A549 (cell line): ENCODE measurements at regions of chr5 and their contacts with region 1.

Region 1: GRCh38 chr5:17189381-17190036 is 27.9 kb upstream of the BASP1 start:
- DNase-seq: peak; percentile 49 to 83
- ATAC-seq: peak; percentile 64 to 79
- H3K4me3 ChIP-seq: no peak overlapping the region
- H3K27ac ChIP-seq: peak overlapping the region; percentile 8 to 75; a peak in 5 of 6 replicates
- H3K4me1 ChIP-seq: peaks cover 51% of the 10 kb centered on the region
- CTCF ChIP-seq: peak; percentile 91
- EP300 ChIP-seq: no peak
- POLR2A ChIP-seq: no peak
- RAD21 ChIP-seq: peak; percentile 86 to 95

Region 2: DNA sequence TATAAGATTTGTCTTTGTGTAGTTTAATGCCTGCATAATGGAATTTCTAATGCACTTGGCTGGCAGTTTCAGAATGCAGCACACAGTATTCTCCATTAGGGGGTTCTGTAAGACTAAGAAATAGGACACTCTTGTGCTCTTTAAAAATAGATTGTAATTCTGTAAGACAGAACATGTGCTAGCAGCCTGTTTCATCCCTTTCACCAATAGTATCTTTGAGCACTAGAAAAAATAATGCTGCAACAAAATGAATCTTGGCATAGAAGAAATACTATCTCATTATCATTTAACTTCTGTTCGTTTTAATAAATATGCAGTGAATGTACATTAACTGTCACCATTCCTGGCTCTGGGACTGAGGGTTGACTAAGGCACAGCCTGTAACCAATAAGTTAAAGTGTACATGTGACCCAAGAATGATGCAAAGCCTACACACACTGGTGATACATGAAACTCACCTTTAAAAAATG is 700.2 kb before region 1 on chr5:
- CTCF ChIA-PET with region 1: interaction called, 16 read pairs
- POLR2A ChIA-PET with region 1: no interaction called
- DNase-seq: peak; percentile 45 to 47
- ATAC-seq: peak; percentile 87 to 93
- H3K4me3 ChIP-seq: no peak overlapping the region
- H3K27ac ChIP-seq: no peak overlapping the region
- H3K4me1 ChIP-seq: 0 out of 3 replicates have a peak, but pooled peaks cover 6% of the 10 kb centered on the region
- CTCF ChIP-seq: peak; percentile 79
- EP300 ChIP-seq: no peak
- POLR2A ChIP-seq: no peak
- RAD21 ChIP-seq: peak; percentile 82 to 87

Region 3: GRCh38 chr5:16759147-16759773 is 430.2 kb before region 1 on chr5:
- CTCF ChIA-PET with region 1: interaction called, 12 read pairs
- POLR2A ChIA-PET with region 1: no interaction called
- DNase-seq: no peak
- ATAC-seq: no peak
- H3K4me3 ChIP-seq: no peak overlapping the region
- H3K27ac ChIP-seq: no peak overlapping the region
- H3K4me1 ChIP-seq: no peaks in the 10 kb centered on the region
- CTCF ChIP-seq: no peak
- EP300 ChIP-seq: no peak
- POLR2A ChIP-seq: no peak
- RAD21 ChIP-seq: no peak

Region 4: GRCh38 chr5:16855485-16855884 is 334.0 kb before region 1 on chr5:
- CTCF ChIA-PET with region 1: interaction called, 15 read pairs
- POLR2A ChIA-PET with region 1: no interaction called
- DNase-seq: no peak
- ATAC-seq: peak in 1 of 2 experiments; percentile 8; a peak in 1 of 6 replicates
- H3K4me3 ChIP-seq: no peak overlapping the region
- H3K27ac ChIP-seq: no peak overlapping the region; a peak in 1 of 6 replicates
- H3K4me1 ChIP-seq: peaks cover 55% of the 10 kb centered on the region
- CTCF ChIP-seq: no peak
- EP300 ChIP-seq: no peak
- POLR2A ChIP-seq: no peak
- RAD21 ChIP-seq: no peak

Region 5: GRCh38 chr5:16916262-16916865 is 273.1 kb before region 1 on chr5:
- CTCF ChIA-PET with region 1: interaction called, 18 read pairs
- POLR2A ChIA-PET with region 1: no interaction called
- DNase-seq: peak in 1 of 2 experiments; percentile 66
- ATAC-seq: peak; percentile 46 to 51; a peak in 3 of 6 replicates
- H3K4me3 ChIP-seq: peak overlapping the region; percentile 14; the same call in 1 of the 3 replicates
- H3K27ac ChIP-seq: peak overlapping the region; percentile 75 to 82
- H3K4me1 ChIP-seq: peaks cover 92% of the 10 kb centered on the region
- CTCF ChIP-seq: no peak
- EP300 ChIP-seq: no peak
- POLR2A ChIP-seq: no peak
- RAD21 ChIP-seq: no peak

Region 6: GRCh38 chr5:17061973-17062470 is 127.5 kb before region 1 on chr5:
- CTCF ChIA-PET with region 1: interaction called, 26 read pairs
- POLR2A ChIA-PET with region 1: no interaction called
- DNase-seq: peak; percentile 52 to 82
- ATAC-seq: peak; percentile 98 to 100
- H3K4me3 ChIP-seq: peak overlapping the region; percentile 42
- H3K27ac ChIP-seq: peak overlapping the region; percentile 80 to 89
- H3K4me1 ChIP-seq: peaks cover 32% of the 10 kb centered on the region
- CTCF ChIP-seq: peak; percentile 60
- EP300 ChIP-seq: no peak
- POLR2A ChIP-seq: no peak
- RAD21 ChIP-seq: peak; percentile 63 to 75

Region 7: GRCh38 chr5:17157916-17158529 is 31.5 kb before region 1 on chr5:
- CTCF ChIA-PET with region 1: interaction called, 28 read pairs
- POLR2A ChIA-PET with region 1: no interaction called
- DNase-seq: peak in 1 of 2 experiments; percentile 79
- ATAC-seq: peak; percentile 85 to 89
- H3K4me3 ChIP-seq: no peak overlapping the region
- H3K27ac ChIP-seq: peak overlapping the region; percentile 62 to 74
- H3K4me1 ChIP-seq: peaks cover 22% of the 10 kb centered on the region
- CTCF ChIP-seq: no peak
- EP300 ChIP-seq: no peak
- POLR2A ChIP-seq: no peak
- RAD21 ChIP-seq: no peak